Activated T-helper 1 cell treated with anti-CD3 and anti-CD28 coated beads, Interleukin-12 subunit alpha, Interleukin-12 subunit beta, Interleukin-2, Interleukin-4 antibody, amounts not matched to agents 30 ng/mL and 10 ng/mL and 1 ng/mL, durations not matched to agents 14 hours and 24 hours and 36 hours (primary cell): ENCODE measurements at regions of chr5 and their contacts with region 1.

Region 1: GRCh38 chr5:132591145-132591544 is 34.4 kb downstream of the RAD50 start:
- DNase-seq: no peak
- H3K4me3 Mint-ChIP-seq: no peak overlapping the region
- H3K27ac Mint-ChIP-seq: no peak overlapping the region
- H3K4me1 Mint-ChIP-seq: peaks cover 2% of the 10 kb centered on the region
- H3K27me3 Mint-ChIP-seq: no peaks in the 10 kb centered on the region

Region 2: GRCh38 chr5:132629230-132629944 is 38.2 kb after region 1 on chr5:
- intact Hi-C with region 1: loop called (anchors 2 kb)
- DNase-seq: no peak
- H3K4me3 Mint-ChIP-seq: peak overlapping the region; percentile 31
- H3K27ac Mint-ChIP-seq: peak overlapping the region; percentile 83
- H3K4me1 Mint-ChIP-seq: peaks cover 55% of the 10 kb centered on the region
- H3K27me3 Mint-ChIP-seq: no peaks in the 10 kb centered on the region

Region 3: DNA sequence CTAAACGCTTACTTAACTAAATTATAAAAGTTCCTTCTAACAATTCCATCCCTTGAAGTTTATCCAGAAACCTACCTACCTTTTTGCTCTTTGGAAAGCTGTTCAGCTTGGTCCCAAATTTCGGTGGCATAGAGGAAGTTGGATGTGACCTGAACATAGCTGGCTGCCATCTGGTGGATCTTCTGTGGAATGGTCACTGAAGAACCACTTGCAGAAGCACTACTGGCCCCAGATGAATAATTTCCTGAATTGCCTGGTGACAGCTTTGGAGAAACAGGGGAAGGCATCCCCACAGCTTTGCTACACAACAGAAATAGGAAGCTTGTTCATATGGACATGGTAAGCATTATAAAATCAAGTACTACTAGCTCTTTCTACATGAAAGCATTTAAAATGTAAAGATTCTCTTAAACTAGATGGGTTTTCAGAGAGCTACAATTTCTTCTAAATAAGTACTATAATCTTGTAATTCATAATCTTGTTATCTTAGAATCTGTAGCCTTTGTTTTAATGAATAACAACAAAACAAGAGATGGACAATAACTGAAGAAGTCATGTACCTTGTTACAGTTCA is 292.2 kb after region 1 on chr5:
- intact Hi-C with region 1: loop called (anchors 2 kb)
- DNase-seq: no peak
- H3K4me3 Mint-ChIP-seq: no peak overlapping the region
- H3K27ac Mint-ChIP-seq: peak overlapping the region; percentile 22
- H3K4me1 Mint-ChIP-seq: peaks cover 24% of the 10 kb centered on the region
- H3K27me3 Mint-ChIP-seq: no peaks in the 10 kb centered on the region